Naive thymus-derived CD4-positive, alpha-beta T cell (primary cell): ENCODE measurements at regions of chr13 and their contacts with region 1.

Region 1: DNA sequence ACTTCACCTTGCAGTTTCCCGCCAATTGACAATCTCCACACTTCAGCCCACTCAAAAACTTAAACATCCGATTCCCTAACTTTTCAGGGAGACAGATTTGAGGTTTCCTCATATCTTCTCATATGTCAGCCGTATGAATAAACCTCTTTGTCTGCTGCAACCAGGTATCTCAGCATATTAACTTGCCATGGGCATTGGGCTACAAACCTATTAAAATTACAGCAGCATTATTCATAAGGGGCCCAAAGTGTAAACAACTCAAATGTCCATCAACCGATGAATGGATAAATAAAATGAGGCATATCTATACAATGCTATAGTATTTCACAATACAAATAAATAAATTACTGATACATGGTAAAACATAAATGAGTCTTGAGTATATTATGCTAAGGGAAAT is 179.4 kb upstream of the ATXN8OS start:
- DNase-seq: no peak
- ATAC-seq: no peak
- H3K4me3 ChIP-seq: no peak overlapping the region
- H3K4me3 Mint-ChIP-seq: no peak overlapping the region
- H3K27ac ChIP-seq: no peak overlapping the region
- H3K27ac Mint-ChIP-seq: no peak overlapping the region
- H3K4me1 ChIP-seq: no peaks in the 10 kb centered on the region
- H3K4me1 Mint-ChIP-seq: no peaks in the 10 kb centered on the region
- H3K27me3 ChIP-seq: no peaks in the 10 kb centered on the region
- H3K27me3 Mint-ChIP-seq: no peaks in the 10 kb centered on the region

Region 2: GRCh38 chr13:69955271-69955670 is 27.0 kb after region 1 on chr13:
- CTCF ChIA-PET with region 1: no interaction called
- POLR2A ChIA-PET with region 1: no interaction called
- intact Hi-C with region 1: loop called in 1 of 2 experiments (anchors 2 kb)
- DNase-seq: no peak
- ATAC-seq: no peak
- H3K4me3 ChIP-seq: no peak overlapping the region
- H3K4me3 Mint-ChIP-seq: no peak overlapping the region
- H3K27ac ChIP-seq: no peak overlapping the region
- H3K27ac Mint-ChIP-seq: no peak overlapping the region
- H3K4me1 ChIP-seq: no peaks in the 10 kb centered on the region
- H3K4me1 Mint-ChIP-seq: no peaks in the 10 kb centered on the region
- H3K27me3 ChIP-seq: no peaks in the 10 kb centered on the region
- H3K27me3 Mint-ChIP-seq: no peaks in the 10 kb centered on the region